ENCODE measurements at regions of chr2 and their contacts with region 1.

Region 1: DNA sequence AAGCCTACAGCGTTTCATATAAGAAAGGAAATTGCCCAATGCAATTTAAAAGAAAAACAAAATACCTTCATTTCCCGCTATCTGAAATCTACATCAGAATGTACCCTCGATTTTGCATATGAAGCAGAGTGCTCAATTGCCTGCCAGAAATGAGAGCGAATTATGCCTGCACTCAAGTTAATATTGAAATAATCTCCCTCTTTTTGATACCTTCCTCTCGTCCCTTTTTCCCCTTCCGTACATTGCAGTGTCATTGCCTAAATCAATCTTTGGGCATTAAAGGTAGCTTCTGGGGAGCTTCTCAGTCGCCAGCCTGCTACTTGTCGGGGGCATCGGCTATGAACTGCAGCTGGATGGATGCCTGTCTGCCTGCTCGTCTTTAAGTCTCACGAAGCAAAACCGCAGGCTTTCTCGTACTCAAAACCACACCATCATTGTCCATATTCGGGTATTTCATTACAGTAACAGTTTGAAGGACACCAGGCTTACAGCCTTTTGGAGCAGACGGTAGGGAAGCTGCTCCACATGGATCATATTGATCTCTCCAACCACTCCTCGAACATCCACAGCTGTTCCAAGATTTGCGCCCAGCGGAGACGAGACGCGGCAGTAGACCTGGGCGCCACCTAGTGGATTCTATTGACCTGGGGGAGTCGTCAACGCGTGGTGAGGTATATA is 64.0 kb upstream of the HNRNPA3 start:
- DNase-seq: peak; percentile 79 to 93
- H3K4me3 ChIP-seq: peak overlapping the region; percentile 13
- H3K4me1 ChIP-seq: peaks cover 9% of the 10 kb centered on the region
- H3K27me3 ChIP-seq: peaks cover 42% of the 10 kb centered on the region

Region 2: GRCh38 chr2:176491172-176491904 is 657.3 kb before region 1 on chr2:
- in situ Hi-C with region 1: loop called (anchors 25 kb)
- DNase-seq: no peak
- H3K4me3 ChIP-seq: no peak overlapping the region
- H3K4me1 ChIP-seq: no peaks in the 10 kb centered on the region
- H3K27me3 ChIP-seq: peaks cover 10% of the 10 kb centered on the region

Region 3: DNA sequence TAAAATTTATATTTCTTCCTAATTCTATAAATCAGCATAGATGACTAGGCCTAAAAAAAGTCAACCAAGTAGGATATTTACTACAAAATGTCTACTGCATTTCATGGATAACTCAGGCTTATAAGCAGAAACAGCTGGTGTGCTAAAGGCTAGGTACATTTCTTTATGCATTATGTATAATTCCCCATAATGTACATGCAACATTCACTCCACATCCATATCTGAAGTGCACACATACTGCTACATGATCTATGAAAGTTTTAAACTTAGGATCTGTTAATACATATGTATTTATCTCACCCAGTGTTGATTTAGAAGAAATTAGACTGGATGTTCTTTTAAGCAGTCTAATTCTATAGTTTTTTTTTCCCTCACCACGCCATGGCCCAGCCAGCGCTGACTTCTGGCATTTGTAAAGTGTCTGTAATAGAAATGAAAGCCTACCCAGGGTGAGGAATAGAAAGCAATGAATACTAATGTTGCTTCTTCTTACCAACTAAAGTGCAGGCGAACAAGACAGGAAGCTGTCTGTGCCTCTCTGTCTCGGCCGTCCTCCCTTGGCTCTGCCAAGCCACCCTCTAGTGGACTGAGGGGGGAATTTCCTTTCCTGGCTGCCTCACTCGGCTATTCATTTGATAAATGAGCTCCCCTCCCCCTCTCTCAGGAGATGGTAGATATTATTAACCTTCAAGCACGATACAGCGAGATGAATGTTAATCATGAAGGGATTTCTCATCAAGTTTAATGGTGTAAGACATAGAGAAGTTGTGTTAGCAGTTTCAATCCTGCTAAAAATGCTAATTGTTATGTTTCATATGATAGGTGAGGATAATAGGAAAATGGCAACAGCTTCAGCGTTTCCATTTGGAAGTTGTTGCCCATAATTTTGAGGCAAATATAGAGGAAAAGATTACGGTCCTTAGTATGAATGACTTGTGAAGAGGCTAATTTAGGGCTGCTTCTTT is 494.9 kb before region 1 on chr2:
- in situ Hi-C with region 1: loop called (anchors 25 kb)
- DNase-seq: peak; percentile 73 to 79
- H3K4me3 ChIP-seq: no peak overlapping the region
- H3K4me1 ChIP-seq: no peaks in the 10 kb centered on the region
- H3K27me3 ChIP-seq: peaks cover 28% of the 10 kb centered on the region

Region 4: GRCh38 chr2:176814306-176815052 is 334.1 kb before region 1 on chr2:
- in situ Hi-C with region 1: loop called (anchors 10 kb)
- DNase-seq: peak in 1 of 2 experiments; percentile 64
- H3K4me3 ChIP-seq: no peak overlapping the region
- H3K4me1 ChIP-seq: peaks cover 20% of the 10 kb centered on the region
- H3K27me3 ChIP-seq: no peaks in the 10 kb centered on the region

Region 5: GRCh38 chr2:177314194-177314593 is 165.6 kb after region 1 on chr2:
- in situ Hi-C with region 1: no loop called
- DNase-seq: no peak
- H3K4me3 ChIP-seq: no peak overlapping the region
- H3K4me1 ChIP-seq: peaks cover 6% of the 10 kb centered on the region
- H3K27me3 ChIP-seq: no peaks in the 10 kb centered on the region